OCI-LY7 (cell line): ENCODE measurements at regions of chr7 and their contacts with region 1.

Region 1: DNA sequence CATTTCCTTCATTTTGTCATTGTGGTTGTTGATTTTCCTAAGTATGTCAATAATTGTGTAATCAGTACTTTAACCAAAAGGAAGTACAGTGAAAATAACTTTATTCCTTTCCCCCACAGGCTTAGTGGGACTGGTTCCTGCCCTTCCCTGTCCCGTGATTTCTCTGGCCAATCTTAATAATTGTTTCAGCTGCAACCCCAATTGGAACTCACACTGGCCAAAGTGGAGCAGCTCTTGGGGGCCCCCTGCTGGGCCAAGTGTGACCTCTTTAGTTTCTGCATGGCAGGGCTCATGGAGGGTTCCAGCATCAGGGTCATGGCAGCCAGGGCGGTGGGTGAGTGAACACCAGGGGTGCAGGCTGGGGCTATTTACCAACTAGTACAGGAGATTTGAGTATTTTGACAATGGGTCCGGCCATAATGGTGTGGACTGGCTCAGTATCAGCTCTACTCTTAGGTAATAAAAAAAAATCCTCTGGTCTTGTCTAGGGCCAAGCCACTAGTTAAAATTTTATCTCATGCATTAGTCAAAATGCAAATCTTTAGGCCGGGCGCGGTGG is 31.7 kb downstream of the CYCS start:
- DNase-seq: peak; percentile 86
- H3K4me3 ChIP-seq: no peak overlapping the region
- H3K27ac ChIP-seq: no peak overlapping the region
- H3K4me1 ChIP-seq: peaks cover 41% of the 10 kb centered on the region
- CTCF ChIP-seq: peak; percentile 97

Region 2: GRCh38 chr7:24290004-24290641 is 803.2 kb before region 1 on chr7:
- CTCF ChIA-PET with region 1: no interaction called
- POLR2A ChIA-PET with region 1: no interaction called
- intact Hi-C with region 1: loop called (anchors 2 kb)
- DNase-seq: peak; percentile 90
- H3K4me3 ChIP-seq: no peak overlapping the region
- H3K27ac ChIP-seq: no peak overlapping the region
- H3K4me1 ChIP-seq: peaks cover 11% of the 10 kb centered on the region
- CTCF ChIP-seq: peak; percentile 91

Region 3: GRCh38 chr7:24401628-24402593 is 691.4 kb before region 1 on chr7:
- CTCF ChIA-PET with region 1: no interaction called
- POLR2A ChIA-PET with region 1: no interaction called
- intact Hi-C with region 1: loop called (anchors 5 kb)
- DNase-seq: peak; percentile 49
- H3K4me3 ChIP-seq: no peak overlapping the region
- H3K27ac ChIP-seq: no peak overlapping the region
- H3K4me1 ChIP-seq: no peaks in the 10 kb centered on the region
- CTCF ChIP-seq: peak; percentile 76

Region 4: GRCh38 chr7:24572997-24573625 is 520.2 kb before region 1 on chr7 and contains the start of gene PALS2:
- CTCF ChIA-PET with region 1: no interaction called
- POLR2A ChIA-PET with region 1: no interaction called
- intact Hi-C with region 1: loop called (anchors 2 kb)
- DNase-seq: peak; percentile 88
- H3K4me3 ChIP-seq: peak within 1 kb of the TSS; percentile 96
- H3K27ac ChIP-seq: peak within 1 kb of the TSS; percentile 64
- H3K4me1 ChIP-seq: peaks cover 36% of the 10 kb centered on the region
- CTCF ChIP-seq: no peak
- total RNA-seq, gene PALS2: 26.3 and 45.1 TPM in 2 replicates

Region 5: DNA sequence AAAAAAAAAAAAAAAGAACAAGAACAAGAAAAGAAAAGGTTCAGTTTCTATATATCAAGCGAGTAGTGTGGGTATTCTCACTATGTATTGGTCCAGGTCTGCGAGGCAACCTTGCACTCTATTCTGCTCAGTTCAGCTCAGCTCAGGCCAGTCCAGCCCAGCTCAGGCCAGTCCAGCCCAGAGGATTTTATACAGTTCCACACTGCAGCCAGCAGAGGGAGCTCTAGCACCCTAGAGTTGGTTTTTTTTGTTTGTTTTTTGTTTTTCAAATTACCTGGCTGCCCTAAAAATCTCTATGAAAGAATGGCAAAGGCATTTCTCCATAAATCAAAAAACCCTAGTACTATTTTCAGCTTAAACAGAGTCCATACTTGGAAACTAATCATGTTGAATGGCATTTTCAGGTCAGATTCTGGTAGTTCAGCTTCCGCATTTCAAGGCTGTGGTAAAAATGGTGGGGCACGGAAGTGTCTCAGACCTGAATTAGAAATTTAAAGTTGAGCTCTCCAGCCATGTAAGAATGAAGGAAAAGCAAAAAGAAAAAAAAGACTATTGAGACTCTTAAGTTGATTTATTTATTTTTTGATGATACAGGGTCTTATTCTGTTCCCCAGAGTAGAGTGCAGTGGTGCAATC is 280.9 kb before region 1 on chr7:
- CTCF ChIA-PET with region 1: interaction called, 4 read pairs
- POLR2A ChIA-PET with region 1: interaction called, 11 read pairs
- intact Hi-C with region 1: loop called (anchors 1 kb)
- DNase-seq: peak; percentile 63
- H3K4me3 ChIP-seq: no peak overlapping the region
- H3K27ac ChIP-seq: no peak overlapping the region
- H3K4me1 ChIP-seq: peaks cover 3% of the 10 kb centered on the region
- CTCF ChIP-seq: peak; percentile 98

Region 6: DNA sequence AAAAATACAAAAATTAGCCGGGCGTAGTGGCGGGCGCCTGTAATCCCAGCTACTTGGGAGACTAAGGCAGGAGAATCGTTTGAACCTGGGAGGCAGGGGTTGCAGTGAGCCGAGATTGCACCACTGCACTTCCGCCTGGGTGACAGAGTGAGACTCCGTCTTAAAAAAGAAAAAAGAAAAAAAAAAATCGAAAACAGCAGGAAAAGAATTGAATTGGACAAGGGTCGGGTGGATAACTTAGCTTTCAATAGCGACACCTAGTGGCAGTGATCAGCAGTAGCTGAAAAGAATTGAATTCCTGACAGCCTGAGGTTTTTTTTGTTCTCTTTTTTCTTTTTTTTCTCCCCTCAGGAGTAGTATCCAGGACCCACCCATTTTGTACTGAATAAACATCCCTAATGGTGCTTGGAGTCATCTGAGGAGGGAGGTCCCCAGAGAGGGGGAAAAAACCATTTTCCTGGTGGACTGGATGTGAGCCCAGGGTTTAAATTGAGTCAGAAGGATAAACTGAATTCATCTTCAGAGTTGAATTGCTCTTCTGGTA is 23.4 kb before region 1 on chr7:
- CTCF ChIA-PET with region 1: interaction called, 5 read pairs
- POLR2A ChIA-PET with region 1: interaction called, 5 read pairs
- intact Hi-C with region 1: loop called (anchors 1 kb)
- DNase-seq: peak; percentile 85
- H3K4me3 ChIP-seq: no peak overlapping the region
- H3K27ac ChIP-seq: no peak overlapping the region
- H3K4me1 ChIP-seq: peaks cover 32% of the 10 kb centered on the region
- CTCF ChIP-seq: peak; percentile 93